ENCODE measurements at regions of chr10 and their contacts with region 1.

Region 1: GRCh38 chr10:6108603-6109443 is 20.0 kb downstream of the RBM17 start:
- H3K4me3 Mint-ChIP-seq: no peak overlapping the region
- H3K27ac Mint-ChIP-seq: no peak overlapping the region
- H3K4me1 Mint-ChIP-seq: peaks cover 10% of the 10 kb centered on the region
- H3K27me3 Mint-ChIP-seq: no peaks in the 10 kb centered on the region

Region 2: GRCh38 chr10:6202684-6203330 is 94.0 kb after region 1 on chr10 and contains the start of gene PFKFB3:
- intact Hi-C with region 1: loop called (anchors 5 kb)
- H3K4me3 Mint-ChIP-seq: peak within 1 kb of the TSS; percentile 89
- H3K27ac Mint-ChIP-seq: peak within 1 kb of the TSS; percentile 68
- H3K4me1 Mint-ChIP-seq: peaks cover 59% of the 10 kb centered on the region
- H3K27me3 Mint-ChIP-seq: peaks cover 13% of the 10 kb centered on the region